ENCODE measurements at regions of chr4 and their contacts with region 1.

Region 1: GRCh38 chr4:6640292-6641163 is at the start of gene MRFAP1:
- DNase-seq: peak; percentile 91 to 97 (median 94)
- ATAC-seq: peak; percentile 84 to 89
- H3K4me3 Mint-ChIP-seq: peak within 1 kb of the TSS; percentile 97 to 100 (median 99)
- H3K27ac Mint-ChIP-seq: peak within 1 kb of the TSS; percentile 98 to 100 (median 99)
- H3K4me1 Mint-ChIP-seq: peaks cover 25 to 45% (median 41%) of the 10 kb centered on the region in 4 donors
- H3K27me3 Mint-ChIP-seq: no peaks in the 10 kb centered on the region
- polyA plus RNA-seq, gene MRFAP1: 141 to 186 (median 155) TPM

Region 2: DNA sequence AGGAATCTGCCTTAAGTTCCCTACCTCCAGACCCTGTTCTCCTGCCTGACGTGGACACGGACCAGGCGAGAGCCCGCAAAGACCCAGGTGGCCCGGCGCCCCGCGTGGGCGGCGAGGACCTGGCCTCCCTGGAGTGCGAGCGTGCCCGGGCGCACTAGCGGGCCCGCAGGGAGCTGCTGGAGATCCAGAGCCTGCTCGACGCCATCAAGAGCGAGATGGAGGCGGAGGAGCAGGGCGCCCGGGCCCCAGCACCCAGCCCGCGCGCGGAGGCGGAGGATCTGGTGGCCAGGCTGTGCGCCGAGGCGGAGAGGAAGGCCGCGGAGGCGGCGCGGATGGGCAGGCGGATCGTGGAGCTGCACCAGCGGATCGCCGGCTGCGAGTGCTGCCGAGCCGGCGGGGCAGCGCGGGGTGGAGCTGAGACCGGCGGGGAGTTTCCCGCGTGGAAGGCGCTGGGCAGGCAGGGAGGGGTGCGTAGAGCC is 18.1 kb after region 1 on chr4:
- POLR2A ChIA-PET with region 1: interaction called, 76 read pairs
- DNase-seq: peak; percentile 37 to 75 (median 54)
- ATAC-seq: peak; percentile 91 to 93
- H3K4me3 Mint-ChIP-seq: peak overlapping the region; percentile 68 to 83 (median 76)
- H3K27ac Mint-ChIP-seq: peak overlapping the region in 5 of 10 donors; percentile 19 to 78 (median 57)
- H3K4me1 Mint-ChIP-seq: peaks cover 1 to 16% (median 13%) of the 10 kb centered on the region in 4 donors
- H3K27me3 Mint-ChIP-seq: peaks cover 0 to 33% (median 5%) of the 10 kb centered on the region in 5 donors

Region 3: DNA sequence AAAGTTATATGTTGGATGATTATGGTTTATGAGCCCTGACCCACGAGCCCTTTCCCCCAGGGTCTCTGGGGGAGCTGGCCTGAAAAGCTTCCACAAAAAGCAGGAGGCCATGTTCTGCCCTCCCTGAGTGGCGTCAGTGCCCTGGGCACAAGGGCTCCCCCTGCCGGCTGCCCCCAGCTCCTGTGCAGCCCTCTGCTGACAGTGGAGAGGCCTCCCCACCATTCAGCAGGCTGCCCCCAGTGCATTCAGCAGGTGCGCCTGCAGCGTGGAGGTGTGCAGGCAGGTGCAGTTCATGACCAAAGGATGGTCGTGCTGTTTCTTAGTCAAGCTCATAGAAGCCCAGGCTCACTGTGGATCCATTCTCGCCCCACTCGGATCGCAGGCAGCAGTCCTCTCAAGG is 40.7 kb after region 1 on chr4:
- POLR2A ChIA-PET with region 1: interaction called, 165 read pairs
- DNase-seq: no peak
- ATAC-seq: no peak
- H3K4me3 Mint-ChIP-seq: no peak overlapping the region
- H3K27ac Mint-ChIP-seq: peak overlapping the region in 5 of 10 donors; percentile 38 to 83 (median 63)
- H3K4me1 Mint-ChIP-seq: peaks cover 18 to 58% (median 38%) of the 10 kb centered on the region in 4 donors
- H3K27me3 Mint-ChIP-seq: no peaks in the 10 kb centered on the region

Region 4: DNA sequence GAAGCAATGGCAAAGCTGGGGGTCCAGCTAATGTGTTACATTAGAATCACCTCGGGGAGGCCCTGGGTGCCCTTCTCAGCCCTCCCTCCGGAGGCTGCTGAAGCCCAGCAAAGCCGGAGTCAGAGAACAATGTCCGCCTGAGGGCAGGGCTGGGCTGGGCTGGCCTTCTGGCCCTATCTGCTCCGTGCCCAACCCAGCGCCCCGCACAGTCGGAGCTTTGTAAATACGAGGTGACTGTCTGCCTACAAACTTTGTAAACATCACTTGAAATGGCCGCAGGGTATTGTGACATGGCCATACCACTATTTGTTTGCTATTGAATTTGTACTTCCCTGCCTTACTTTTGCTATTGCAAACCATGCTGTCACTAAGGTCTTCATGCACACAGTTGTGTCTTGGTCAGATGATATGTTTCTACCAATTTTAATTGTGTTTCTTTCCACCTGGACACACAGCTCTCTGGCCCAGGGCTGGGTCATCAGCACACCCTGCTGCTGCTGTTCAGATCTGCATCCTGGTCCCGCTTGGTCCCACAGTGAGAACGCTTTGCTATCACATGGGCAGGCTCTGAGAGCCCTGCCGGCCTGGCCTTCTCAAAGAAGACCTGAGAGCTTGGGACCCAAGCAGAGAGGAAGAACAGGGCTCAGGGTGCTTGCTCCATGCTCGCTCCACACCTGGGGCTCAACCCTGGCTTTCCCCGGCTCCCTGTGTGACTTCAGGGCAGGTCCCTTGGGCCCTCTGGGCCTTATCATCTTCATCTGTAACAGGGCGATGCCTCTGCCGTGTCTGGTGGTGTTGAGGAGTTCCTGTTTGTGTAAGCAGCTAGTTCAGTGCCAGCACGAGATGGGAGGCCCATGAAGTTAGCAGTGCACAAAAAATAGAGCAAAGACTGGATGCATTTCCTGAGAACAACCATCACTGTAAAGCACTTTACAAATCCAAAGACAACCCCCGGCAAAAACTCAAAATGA is 55.4 kb after region 1 on chr4:
- POLR2A ChIA-PET with region 1: interaction called, 32 read pairs
- DNase-seq: peak in 9 of 10 donors; percentile 27 to 81 (median 55)
- ATAC-seq: peak; percentile 86 to 90
- H3K4me3 Mint-ChIP-seq: peak overlapping the region; percentile 40 to 85 (median 74)
- H3K27ac Mint-ChIP-seq: peak overlapping the region; percentile 90 to 98 (median 94)
- H3K4me1 Mint-ChIP-seq: peaks cover 49 to 87% (median 82%) of the 10 kb centered on the region in 4 donors
- H3K27me3 Mint-ChIP-seq: no peaks in the 10 kb centered on the region

Region 5: GRCh38 chr4:7067452-7068278 is 427.1 kb after region 1 on chr4 and contains the start of gene GRPEL1:
- POLR2A ChIA-PET with region 1: interaction called, 15 read pairs
- DNase-seq: peak; percentile 37 to 100 (median 100)
- ATAC-seq: peak; percentile 91 to 92
- H3K4me3 Mint-ChIP-seq: peak within 1 kb of the TSS; percentile 85 to 98 (median 96)
- H3K27ac Mint-ChIP-seq: peak within 1 kb of the TSS; percentile 91 to 98 (median 96)
- H3K4me1 Mint-ChIP-seq: peaks cover 18 to 59% (median 52%) of the 10 kb centered on the region in 4 donors
- H3K27me3 Mint-ChIP-seq: peaks cover 0 to 3% (median 0%) of the 10 kb centered on the region in 5 donors
- polyA plus RNA-seq, gene GRPEL1: 31.4 to 47.6 (median 36.3) TPM